Activated T-helper 2 cell treated with anti-CD3 and anti-CD28 coated beads, Interferon-gamma antibody, Interleukin-2, Interleukin-4, amounts not matched to agents 10 μg/mL and 5 μg/mL and 100 μg/mL, durations not matched to agents 14 hours and 24 hours and 36 hours (primary cell): ENCODE measurements at regions of chr20 and their contacts with region 1.

Region 1: DNA sequence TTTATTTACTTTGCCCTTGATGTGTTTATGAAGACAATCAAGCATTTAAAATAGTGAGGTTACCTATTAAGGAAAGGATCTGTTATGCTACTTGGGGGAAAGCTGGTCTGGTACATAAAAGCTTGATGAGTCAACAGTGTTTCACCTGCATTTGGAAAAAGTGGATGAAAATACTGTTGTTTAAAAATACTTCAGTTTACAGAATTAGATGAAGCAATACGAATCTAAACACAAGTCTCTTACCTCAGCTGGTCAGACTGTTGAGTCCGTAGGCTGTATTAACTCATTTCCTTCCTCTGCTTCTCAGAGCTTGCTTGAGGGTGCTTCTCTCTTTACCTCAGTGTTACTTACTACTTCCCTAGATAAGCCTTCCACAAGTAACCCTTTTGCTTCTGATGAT is 36.1 kb downstream of the NKX2-4 start:
- DNase-seq: no peak
- H3K4me3 Mint-ChIP-seq: no peak overlapping the region
- H3K27ac Mint-ChIP-seq: peak overlapping the region; percentile 46
- H3K4me1 Mint-ChIP-seq: peaks cover 21% of the 10 kb centered on the region
- H3K27me3 Mint-ChIP-seq: no peaks in the 10 kb centered on the region

Region 2: DNA sequence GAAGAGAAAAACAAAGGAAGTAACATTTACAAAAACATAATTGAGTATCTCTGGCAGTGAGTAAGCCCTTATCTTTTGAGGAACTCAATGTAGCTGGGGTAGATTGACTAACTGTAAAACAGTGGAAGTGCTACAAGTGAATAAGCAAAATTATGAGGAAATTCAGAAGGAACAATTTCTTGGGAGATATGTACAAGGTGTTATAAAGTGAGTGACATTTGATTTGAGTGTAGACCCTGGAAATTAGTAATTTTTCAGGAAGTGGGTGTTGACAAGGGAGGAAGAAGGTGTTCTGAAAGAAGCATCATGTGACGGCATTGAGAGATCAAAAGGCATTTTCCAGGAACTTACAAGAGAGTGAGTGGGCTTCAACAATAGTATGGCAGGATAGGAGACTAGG is 36.0 kb before region 1 on chr20:
- intact Hi-C with region 1: loop called (anchors 5 kb)
- DNase-seq: no peak
- H3K4me3 Mint-ChIP-seq: peak overlapping the region; percentile 30
- H3K27ac Mint-ChIP-seq: peak overlapping the region; percentile 62
- H3K4me1 Mint-ChIP-seq: peaks cover 41% of the 10 kb centered on the region
- H3K27me3 Mint-ChIP-seq: no peaks in the 10 kb centered on the region